ENCODE measurements at regions of chr6 and their contacts with region 1.

Region 1: DNA sequence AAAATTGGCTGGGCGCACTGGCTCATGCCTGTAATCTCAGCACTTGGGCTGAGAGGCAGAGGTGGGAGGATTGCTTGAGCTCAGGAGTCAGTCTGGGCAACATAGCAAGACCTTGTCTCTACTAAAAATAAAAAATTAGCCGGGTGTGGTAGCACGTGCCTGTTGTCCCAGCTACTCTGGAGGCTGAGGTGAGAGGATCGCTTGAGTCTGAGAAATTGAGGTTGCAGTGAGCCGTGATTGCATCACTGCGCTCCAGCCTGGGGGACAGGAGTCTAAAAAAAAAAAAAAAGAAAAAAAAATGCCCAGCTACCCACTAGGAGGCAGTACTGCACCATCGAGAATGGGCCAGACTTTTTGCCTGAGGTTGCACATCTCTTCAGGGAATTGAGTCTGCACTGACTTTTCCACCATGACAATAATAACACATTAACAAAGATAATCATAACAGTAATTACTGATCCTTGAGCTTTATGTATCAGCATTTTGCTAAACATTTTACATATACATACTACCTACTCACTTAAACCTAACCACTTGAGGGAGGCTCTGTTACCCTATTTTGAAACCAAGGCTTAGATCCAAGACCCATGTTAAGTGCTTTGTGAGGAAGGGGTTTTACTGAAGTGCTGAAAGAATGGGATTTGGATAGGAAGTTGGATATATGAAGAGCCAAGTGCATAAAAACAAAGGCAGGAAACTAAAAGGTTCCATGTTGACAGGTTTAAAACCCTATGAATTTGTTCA is 21.0 kb downstream of the SRSF3 start:
- DNase-seq: no peak
- ATAC-seq: peak; percentile 69
- H3K4me3 ChIP-seq: no peak overlapping the region
- H3K27ac ChIP-seq: no peak overlapping the region
- H3K4me1 ChIP-seq: peaks cover 6% of the 10 kb centered on the region
- H3K27me3 ChIP-seq: no peaks in the 10 kb centered on the region
- CTCF ChIP-seq: peak; percentile 74 to 84 (median 80)
- EP300 ChIP-seq: no peak
- POLR2A ChIP-seq: no peak
- RAD21 ChIP-seq: peak; percentile 97

Region 2: DNA sequence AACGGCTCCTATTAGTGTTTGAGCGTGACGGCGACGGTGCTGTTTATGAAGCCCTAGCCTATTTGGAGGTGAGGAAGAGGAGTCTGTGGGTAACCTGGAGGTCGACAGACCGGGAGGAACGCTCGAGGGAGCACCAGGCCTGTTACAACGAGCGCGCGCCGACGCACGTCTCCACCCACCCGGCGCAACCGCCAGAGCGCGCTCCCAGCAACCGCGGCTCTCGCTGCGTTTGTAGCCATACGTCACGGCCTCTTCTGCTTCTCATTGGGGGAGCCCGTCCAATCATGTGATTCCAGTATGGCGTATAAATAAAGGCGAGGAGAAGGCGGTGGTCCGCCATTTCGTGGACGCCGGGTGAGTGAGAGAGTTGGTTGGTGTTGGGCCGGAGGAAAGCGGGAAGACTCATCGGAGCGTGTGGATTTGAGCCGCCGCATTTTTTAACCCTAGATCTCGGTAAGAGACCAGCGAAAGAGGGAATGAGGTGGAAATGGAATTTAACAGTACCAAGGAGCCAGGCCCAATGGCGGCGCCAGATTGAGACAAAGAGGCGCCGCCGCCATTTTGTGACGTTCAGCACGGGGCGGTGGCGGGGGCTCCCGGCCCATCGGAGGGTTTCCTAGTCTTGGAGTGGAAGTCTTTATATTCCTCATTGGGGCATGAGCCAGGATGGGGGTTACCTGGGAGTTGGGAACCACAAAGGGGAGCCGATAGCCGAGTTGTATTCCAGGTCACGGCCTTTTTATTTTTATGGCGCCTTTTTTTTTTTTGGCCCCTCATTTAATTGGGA is 21.0 kb before region 1 on chr6 and contains the start of gene SRSF3:
- CTCF ChIA-PET with region 1: interaction called, 29 read pairs
- POLR2A ChIA-PET with region 1: interaction called, 5 read pairs
- RAD21 ChIA-PET with region 1: interaction called, 3 read pairs
- SMC1A ChIA-PET with region 1: interaction called, 50 read pairs
- in situ Hi-C with region 1: no loop called
- intact Hi-C with region 1: no loop called
- DNase-seq: peak; percentile 90
- ATAC-seq: peak; percentile 89
- H3K4me3 ChIP-seq: peak within 1 kb of the TSS; percentile 100
- H3K27ac ChIP-seq: peak within 1 kb of the TSS; percentile 87
- H3K4me1 ChIP-seq: peaks cover 11% of the 10 kb centered on the region
- H3K27me3 ChIP-seq: no peaks in the 10 kb centered on the region
- CTCF ChIP-seq: peak; percentile 20 to 43 (median 28); a peak in 3 of 6 replicates
- EP300 ChIP-seq: peak in 1 of 2 experiments; percentile 56; a peak in 2 of 4 replicates
- POLR2A ChIP-seq: peak; percentile 100
- RAD21 ChIP-seq: no peak
- polyA plus RNA-seq, gene SRSF3: 971 to 1,377 TPM

Region 3: GRCh38 chr6:36650848-36651478 is 35.8 kb after region 1 on chr6:
- CTCF ChIA-PET with region 1: interaction called, 10 read pairs
- POLR2A ChIA-PET with region 1: no interaction called
- RAD21 ChIA-PET with region 1: interaction called, 5 read pairs
- SMC1A ChIA-PET with region 1: interaction called, 4 read pairs
- in situ Hi-C with region 1: no loop called
- intact Hi-C with region 1: no loop called
- DNase-seq: peak; percentile 69
- ATAC-seq: peak; percentile 95
- H3K4me3 ChIP-seq: no peak overlapping the region
- H3K27ac ChIP-seq: peak overlapping the region; percentile 52
- H3K4me1 ChIP-seq: peaks cover 42% of the 10 kb centered on the region
- H3K27me3 ChIP-seq: no peaks in the 10 kb centered on the region
- CTCF ChIP-seq: peak in 1 of 3 experiments; percentile 31; a peak in 1 of 6 replicates
- EP300 ChIP-seq: peak; percentile 59 to 90; a peak in 3 of 4 replicates
- POLR2A ChIP-seq: no peak
- RAD21 ChIP-seq: peak; percentile 34

Region 4: DNA sequence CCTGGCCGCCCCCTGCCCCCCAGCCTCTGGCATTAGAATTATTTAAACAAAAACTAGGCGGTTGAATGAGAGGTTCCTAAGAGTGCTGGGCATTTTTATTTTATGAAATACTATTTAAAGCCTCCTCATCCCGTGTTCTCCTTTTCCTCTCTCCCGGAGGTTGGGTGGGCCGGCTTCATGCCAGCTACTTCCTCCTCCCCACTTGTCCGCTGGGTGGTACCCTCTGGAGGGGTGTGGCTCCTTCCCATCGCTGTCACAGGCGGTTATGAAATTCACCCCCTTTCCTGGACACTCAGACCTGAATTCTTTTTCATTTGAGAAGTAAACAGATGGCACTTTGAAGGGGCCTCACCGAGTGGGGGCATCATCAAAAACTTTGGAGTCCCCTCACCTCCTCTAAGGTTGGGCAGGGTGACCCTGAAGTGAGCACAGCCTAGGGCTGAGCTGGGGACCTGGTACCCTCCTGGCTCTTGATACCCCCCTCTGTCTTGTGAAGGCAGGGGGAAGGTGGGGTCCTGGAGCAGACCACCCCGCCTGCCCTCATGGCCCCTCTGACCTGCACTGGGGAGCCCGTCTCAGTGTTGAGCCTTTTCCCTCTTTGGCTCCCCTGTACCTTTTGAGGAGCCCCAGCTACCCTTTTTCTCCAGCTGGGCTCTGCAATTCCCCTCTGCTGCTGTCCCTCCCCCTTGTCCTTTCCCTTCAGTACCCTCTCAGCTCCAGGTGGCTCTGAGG is 70.9 kb after region 1 on chr6:
- CTCF ChIA-PET with region 1: interaction called, 66 read pairs
- POLR2A ChIA-PET with region 1: interaction called, 3 read pairs
- RAD21 ChIA-PET with region 1: interaction called, 6 read pairs
- SMC1A ChIA-PET with region 1: interaction called, 33 read pairs
- in situ Hi-C with region 1: loop called (anchors 5 kb)
- intact Hi-C with region 1: no loop called
- DNase-seq: no peak
- ATAC-seq: no peak
- H3K4me3 ChIP-seq: no peak overlapping the region
- H3K27ac ChIP-seq: no peak overlapping the region
- H3K4me1 ChIP-seq: peaks cover 34% of the 10 kb centered on the region
- H3K27me3 ChIP-seq: no peaks in the 10 kb centered on the region
- CTCF ChIP-seq: no peak
- EP300 ChIP-seq: no peak
- POLR2A ChIP-seq: no peak
- RAD21 ChIP-seq: no peak

Region 5: GRCh38 chr6:36724514-36725390 is 109.6 kb after region 1 on chr6:
- CTCF ChIA-PET with region 1: interaction called, 24 read pairs
- POLR2A ChIA-PET with region 1: interaction called, 4 read pairs
- RAD21 ChIA-PET with region 1: interaction called, 30 read pairs
- SMC1A ChIA-PET with region 1: interaction called, 33 read pairs
- in situ Hi-C with region 1: no loop called
- intact Hi-C with region 1: no loop called
- DNase-seq: no peak
- ATAC-seq: peak; percentile 34
- H3K4me3 ChIP-seq: no peak overlapping the region
- H3K27ac ChIP-seq: 0 out of 2 replicates have a peak overlapping the region, but pooled peaks have one; percentile 9
- H3K4me1 ChIP-seq: peaks cover 36% of the 10 kb centered on the region
- H3K27me3 ChIP-seq: no peaks in the 10 kb centered on the region
- CTCF ChIP-seq: peak; percentile 43 to 69 (median 51)
- EP300 ChIP-seq: no peak
- POLR2A ChIP-seq: no peak
- RAD21 ChIP-seq: peak; percentile 69

Region 6: DNA sequence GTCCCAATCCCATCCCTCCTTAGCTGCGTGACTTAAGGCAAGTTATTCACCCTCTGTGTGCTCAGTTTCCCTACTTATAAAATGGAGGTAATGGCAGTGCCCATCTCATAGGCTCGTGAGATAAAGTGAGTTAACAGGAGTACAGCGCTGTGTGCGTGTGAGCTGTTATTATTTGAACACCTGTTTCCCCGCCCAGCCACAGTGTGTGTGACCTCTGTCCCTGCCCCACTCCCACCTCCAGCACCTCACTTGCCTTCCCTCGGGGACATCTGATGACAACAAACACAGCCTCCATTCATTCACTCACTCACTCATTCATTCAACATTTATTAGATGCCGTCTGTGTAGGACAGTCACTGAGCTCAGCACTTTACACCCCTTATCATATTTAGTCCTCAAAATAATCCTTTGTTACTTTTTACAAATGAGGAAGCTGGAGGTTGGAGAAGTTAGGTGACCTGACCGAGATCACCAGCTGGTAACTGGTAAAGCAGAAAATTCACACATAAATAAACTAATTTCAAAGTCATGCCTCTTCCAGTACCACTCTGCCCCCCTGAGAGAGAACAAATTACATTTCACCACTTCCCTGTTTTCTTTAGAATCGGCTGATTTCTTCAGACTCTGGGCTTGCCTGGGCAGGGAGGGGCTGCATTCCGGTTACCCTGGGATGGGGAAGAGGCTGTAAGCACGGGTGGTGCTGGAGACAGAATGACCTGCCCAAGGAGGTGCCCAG is 165.4 kb after region 1 on chr6:
- CTCF ChIA-PET with region 1: interaction called, 60 read pairs
- POLR2A ChIA-PET with region 1: interaction called, 3 read pairs
- RAD21 ChIA-PET with region 1: interaction called, 21 read pairs
- SMC1A ChIA-PET with region 1: interaction called, 15 read pairs
- in situ Hi-C with region 1: no loop called
- intact Hi-C with region 1: no loop called
- DNase-seq: no peak
- ATAC-seq: no peak
- H3K4me3 ChIP-seq: no peak overlapping the region
- H3K27ac ChIP-seq: no peak overlapping the region
- H3K4me1 ChIP-seq: peaks cover 21% of the 10 kb centered on the region
- H3K27me3 ChIP-seq: peaks cover 0 to 6% of the 10 kb centered on the region in 2 experiments; a peak in 1 of 4 replicates
- CTCF ChIP-seq: no peak
- EP300 ChIP-seq: no peak
- POLR2A ChIP-seq: no peak
- RAD21 ChIP-seq: no peak